Left cardiac atrium (tissue), 4 donors: ENCODE measurements at regions of chr22 and their contacts with region 1.

Region 1: GRCh38 chr22:41517172-41518047 is 26.9 kb downstream of the POLR3H start:
- DNase-seq: peak; percentile 74
- ATAC-seq: peak; percentile 32 to 42

Region 2: DNA sequence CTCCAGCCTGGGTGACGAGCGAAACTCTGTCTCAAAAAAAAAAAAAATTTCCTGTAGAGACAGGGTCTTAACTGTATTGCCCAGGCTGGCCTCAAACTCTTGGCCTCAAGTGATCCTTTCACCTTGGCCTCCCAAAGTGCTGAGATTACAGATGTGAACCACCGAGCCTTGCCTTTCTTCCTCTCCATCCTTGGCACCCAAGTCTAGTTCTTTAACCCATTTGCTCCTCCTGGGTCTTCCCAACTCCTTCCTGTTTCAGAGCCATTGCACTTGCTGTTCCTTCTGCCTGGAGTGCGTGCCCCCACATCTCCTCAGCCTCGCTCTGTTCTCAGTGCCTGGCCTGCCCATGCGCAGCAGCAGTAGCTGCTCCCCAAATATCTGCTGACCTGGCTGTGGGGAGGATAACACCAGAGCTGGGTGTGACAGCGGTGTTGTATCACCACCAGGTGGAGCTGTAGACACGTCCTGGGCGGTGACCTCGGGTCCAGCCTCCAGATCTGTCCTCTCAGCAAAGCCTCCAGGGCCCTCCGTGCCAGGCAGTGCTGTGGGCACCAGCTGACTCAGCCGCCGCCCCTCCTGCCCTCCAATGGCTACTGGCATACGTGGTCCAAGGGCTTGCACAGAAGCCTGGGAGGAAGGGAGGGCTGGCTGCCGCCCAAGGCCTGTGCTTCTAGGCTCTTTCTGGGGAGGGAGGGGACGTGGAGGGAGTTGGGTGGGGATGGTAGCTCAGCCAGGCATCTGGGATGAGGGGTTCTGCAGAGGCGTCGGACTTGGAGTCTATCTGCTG is 113.7 kb before region 1 on chr22:
- intact Hi-C with region 1: loop called (anchors 5 kb)
- DNase-seq: peak; percentile 92
- ATAC-seq: peak; percentile 87 to 95

Region 3: GRCh38 chr22:41471568-41471967 is 45.8 kb before region 1 on chr22:
- intact Hi-C with region 1: loop called in 1 of 2 experiments (anchors 5 kb)
- DNase-seq: no peak
- ATAC-seq: no peak

Region 4: DNA sequence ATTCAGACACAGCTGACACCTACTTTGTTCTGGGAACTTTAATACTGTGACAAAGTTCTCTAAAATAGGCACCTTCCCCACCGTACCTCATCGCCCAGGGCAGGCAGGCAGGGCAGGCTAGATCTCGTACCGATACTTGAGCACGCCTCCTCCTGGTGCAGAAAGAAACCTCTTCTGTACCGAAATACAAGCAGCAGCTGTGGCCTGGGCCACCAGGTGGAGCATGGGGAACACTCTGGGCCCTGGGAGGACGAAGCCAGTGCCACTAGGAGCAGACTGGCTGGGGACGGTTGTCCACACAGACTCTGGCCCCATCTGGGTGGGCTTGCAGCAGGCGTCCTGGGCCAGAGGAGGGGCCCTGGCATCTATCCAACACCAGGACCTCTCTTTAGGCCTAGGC is 59.5 kb after region 1 on chr22:
- intact Hi-C with region 1: no loop called
- DNase-seq: peak; percentile 62
- ATAC-seq: peak; percentile 39 to 65